ENCODE measurements at regions of chr20 and their contacts with region 1.

Region 1: GRCh38 chr20:62972270-62973032 is 19.9 kb downstream of the SLC17A9 start:
- DNase-seq: peak; percentile 97
- H3K4me3 Mint-ChIP-seq: peak overlapping the region; percentile 0
- H3K27ac Mint-ChIP-seq: no peak overlapping the region
- H3K4me1 Mint-ChIP-seq: peaks cover 14% of the 10 kb centered on the region
- H3K27me3 Mint-ChIP-seq: peaks cover 61% of the 10 kb centered on the region
- CTCF ChIP-seq: peak; percentile 93

Region 2: DNA sequence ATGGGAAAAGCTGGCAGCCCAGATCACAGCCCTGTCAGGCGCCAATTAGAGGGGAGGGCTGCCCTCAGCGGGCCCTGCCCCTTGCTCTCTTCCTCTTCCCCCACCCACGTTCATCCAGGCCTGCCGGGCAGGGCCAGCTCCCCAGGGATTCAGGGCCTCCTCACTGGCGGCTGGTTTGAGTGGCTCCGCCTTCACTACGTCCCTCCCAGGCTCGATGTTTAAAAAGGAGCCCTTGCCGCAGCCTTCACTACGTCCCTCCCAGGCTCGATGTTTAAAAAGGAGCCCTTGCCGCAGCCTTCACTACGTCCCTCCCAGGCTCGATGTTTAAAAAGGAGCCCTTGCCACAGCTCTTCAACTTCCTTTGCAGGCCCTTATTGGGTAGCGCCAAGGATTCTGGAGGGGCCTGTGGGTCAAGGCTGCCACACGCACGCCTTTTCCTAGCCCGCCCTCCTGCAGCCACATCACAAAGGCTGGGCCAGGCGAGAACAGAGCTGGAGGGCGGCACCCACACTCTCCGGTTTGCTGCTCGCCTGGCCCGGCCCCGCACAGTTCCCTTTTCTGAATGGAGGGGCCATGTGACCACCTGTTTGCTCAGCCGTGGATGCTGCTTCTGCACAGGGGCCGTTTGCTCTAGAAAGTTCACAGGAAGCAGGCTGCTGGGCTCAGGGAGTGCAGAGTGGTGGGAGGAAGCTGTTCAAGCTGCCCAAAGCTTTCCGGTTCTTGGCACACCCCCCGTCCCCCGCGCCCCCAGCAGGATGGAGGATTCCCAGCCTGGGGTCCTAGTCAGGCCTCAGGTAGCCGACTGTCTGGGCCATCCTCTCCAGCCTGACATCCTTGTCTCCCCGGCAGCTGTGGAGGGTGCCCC is 18.4 kb before region 1 on chr20:
- CTCF ChIA-PET with region 1: interaction called, 10 read pairs
- intact Hi-C with region 1: no loop called
- DNase-seq: no peak
- H3K4me3 Mint-ChIP-seq: peak overlapping the region; percentile 70
- H3K27ac Mint-ChIP-seq: no peak overlapping the region
- H3K4me1 Mint-ChIP-seq: peaks cover 8% of the 10 kb centered on the region
- H3K27me3 Mint-ChIP-seq: no peaks in the 10 kb centered on the region
- CTCF ChIP-seq: no peak

Region 3: GRCh38 chr20:63009045-63009961 is 36.9 kb after region 1 on chr20:
- CTCF ChIA-PET with region 1: interaction called, 47 read pairs
- intact Hi-C with region 1: loop called (anchors 1 kb)
- DNase-seq: peak; percentile 91
- H3K4me3 Mint-ChIP-seq: peak overlapping the region; percentile 51
- H3K27ac Mint-ChIP-seq: no peak overlapping the region
- H3K4me1 Mint-ChIP-seq: peaks cover 13% of the 10 kb centered on the region
- H3K27me3 Mint-ChIP-seq: peaks cover 96% of the 10 kb centered on the region
- CTCF ChIP-seq: peak; percentile 97

Region 4: GRCh38 chr20:63295422-63295821 is 323.0 kb after region 1 on chr20:
- CTCF ChIA-PET with region 1: interaction called, 10 read pairs
- intact Hi-C with region 1: no loop called
- DNase-seq: no peak
- H3K4me3 Mint-ChIP-seq: no peak overlapping the region
- H3K27ac Mint-ChIP-seq: no peak overlapping the region
- H3K4me1 Mint-ChIP-seq: no peaks in the 10 kb centered on the region
- H3K27me3 Mint-ChIP-seq: peaks cover 88% of the 10 kb centered on the region
- CTCF ChIP-seq: no peak